ENCODE measurements at regions of chr15 and their contacts with region 1.

Region 1: GRCh38 chr15:66700802-66701421 is 1.1 kb upstream of the SMAD6 start:
- DNase-seq: peak; percentile 93
- ATAC-seq: peak; percentile 55
- H3K4me3 Mint-ChIP-seq: peak overlapping the region; percentile 90
- H3K27ac Mint-ChIP-seq: 0 out of 2 replicates have a peak overlapping the region, but pooled peaks have one; percentile 12
- H3K4me1 Mint-ChIP-seq: peaks cover 37% of the 10 kb centered on the region
- H3K27me3 Mint-ChIP-seq: peaks cover 28% of the 10 kb centered on the region
- CTCF ChIP-seq: no peak

Region 2: GRCh38 chr15:66619151-66619903 is 81.6 kb before region 1 on chr15:
- CTCF ChIA-PET with region 1: interaction called, 87 read pairs
- POLR2A ChIA-PET with region 1: interaction called, 8 read pairs
- DNase-seq: peak; percentile 85
- ATAC-seq: peak; percentile 67
- H3K4me3 Mint-ChIP-seq: no peak overlapping the region
- H3K27ac Mint-ChIP-seq: no peak overlapping the region; the same call in 1 of the 2 replicates
- H3K4me1 Mint-ChIP-seq: peaks cover 64% of the 10 kb centered on the region
- H3K27me3 Mint-ChIP-seq: peaks cover 5% of the 10 kb centered on the region
- CTCF ChIP-seq: peak; percentile 73

Region 3: DNA sequence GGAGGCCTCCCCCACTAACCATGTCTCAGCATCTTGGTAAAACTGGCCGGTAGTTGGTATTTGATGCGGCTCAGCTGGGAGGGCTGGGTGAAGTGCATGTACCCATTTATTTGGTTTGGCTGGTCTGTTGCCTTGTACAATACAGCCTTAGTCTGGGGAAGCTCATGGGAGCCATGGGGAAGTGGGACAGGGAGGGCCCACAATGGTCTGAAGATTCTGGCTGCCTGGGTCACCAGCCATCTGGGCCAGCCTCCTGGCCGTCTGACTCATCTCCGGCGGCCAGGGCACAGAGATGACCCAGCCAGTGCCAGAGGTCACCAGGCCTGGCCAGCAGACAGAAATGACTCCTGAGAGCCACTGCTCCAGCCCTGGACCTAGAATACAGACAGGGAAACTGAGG is 50.5 kb before region 1 on chr15:
- CTCF ChIA-PET with region 1: interaction called, 12 read pairs
- POLR2A ChIA-PET with region 1: no interaction called
- DNase-seq: no peak
- ATAC-seq: no peak
- H3K4me3 Mint-ChIP-seq: no peak overlapping the region
- H3K27ac Mint-ChIP-seq: no peak overlapping the region
- H3K4me1 Mint-ChIP-seq: peaks cover 30% of the 10 kb centered on the region
- H3K27me3 Mint-ChIP-seq: peaks cover 3% of the 10 kb centered on the region; the same call in 1 of the 2 replicates
- CTCF ChIP-seq: no peak

Region 4: GRCh38 chr15:66679657-66680108 is 21.2 kb before region 1 on chr15:
- CTCF ChIA-PET with region 1: interaction called, 10 read pairs
- POLR2A ChIA-PET with region 1: interaction called, 3 read pairs
- DNase-seq: peak; percentile 46
- ATAC-seq: peak; percentile 88
- H3K4me3 Mint-ChIP-seq: no peak overlapping the region
- H3K27ac Mint-ChIP-seq: peak overlapping the region; percentile 11; the same call in 1 of the 2 replicates
- H3K4me1 Mint-ChIP-seq: peaks cover 15% of the 10 kb centered on the region
- H3K27me3 Mint-ChIP-seq: no peaks in the 10 kb centered on the region
- CTCF ChIP-seq: no peak

Region 5: DNA sequence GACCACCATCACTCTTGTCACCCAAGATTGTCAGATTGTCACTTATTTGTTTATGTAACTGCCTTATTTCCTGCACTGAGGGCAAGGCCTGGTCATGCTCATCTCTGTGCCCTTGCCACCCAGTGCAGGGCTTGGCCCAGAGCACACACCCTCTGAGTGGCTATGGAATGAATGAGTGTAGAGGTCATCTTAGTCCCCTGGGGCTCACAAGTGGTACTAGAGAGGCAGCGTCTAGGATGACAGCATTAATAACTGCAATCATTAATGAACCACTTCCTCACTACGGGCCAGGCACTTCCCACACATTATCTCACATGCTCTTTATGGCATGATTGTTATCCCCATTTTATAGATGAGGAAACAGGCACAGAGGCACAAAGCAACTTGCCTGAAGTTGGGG is 118.2 kb after region 1 on chr15:
- CTCF ChIA-PET with region 1: no interaction called
- POLR2A ChIA-PET with region 1: no interaction called
- DNase-seq: no peak
- ATAC-seq: no peak
- H3K4me3 Mint-ChIP-seq: no peak overlapping the region
- H3K27ac Mint-ChIP-seq: no peak overlapping the region
- H3K4me1 Mint-ChIP-seq: peaks cover 18% of the 10 kb centered on the region
- H3K27me3 Mint-ChIP-seq: peaks cover 3% of the 10 kb centered on the region; the same call in 1 of the 2 replicates
- CTCF ChIP-seq: no peak

Region 6: GRCh38 chr15:67175643-67176071 is 474.7 kb after region 1 on chr15:
- CTCF ChIA-PET with region 1: no interaction called
- POLR2A ChIA-PET with region 1: no interaction called
- DNase-seq: no peak
- ATAC-seq: no peak
- H3K4me3 Mint-ChIP-seq: no peak overlapping the region
- H3K27ac Mint-ChIP-seq: no peak overlapping the region
- H3K4me1 Mint-ChIP-seq: peaks cover 34% of the 10 kb centered on the region
- H3K27me3 Mint-ChIP-seq: no peaks in the 10 kb centered on the region
- CTCF ChIP-seq: no peak

Measured in WTC11 (cell line).